ENCODE measurements at regions of chr2 and their contacts with region 1.

Region 1: GRCh38 chr2:146634256-146635097 is 1210.4 kb upstream of the ACVR2A start:
- DNase-seq: peak; percentile 45 to 51
- H3K4me3 ChIP-seq: no peak overlapping the region
- H3K27ac ChIP-seq: no peak overlapping the region
- H3K4me1 ChIP-seq: no peaks in the 10 kb centered on the region
- H3K27me3 ChIP-seq: no peaks in the 10 kb centered on the region
- CTCF ChIP-seq: no peak

Region 2: GRCh38 chr2:146506851-146507250 is 127.6 kb before region 1 on chr2:
- CTCF ChIA-PET with region 1: no interaction called
- POLR2A ChIA-PET with region 1: no interaction called
- intact Hi-C with region 1: no loop called
- DNase-seq: no peak
- H3K4me3 ChIP-seq: no peak overlapping the region
- H3K27ac ChIP-seq: no peak overlapping the region
- H3K4me1 ChIP-seq: no peaks in the 10 kb centered on the region
- H3K27me3 ChIP-seq: no peaks in the 10 kb centered on the region
- CTCF ChIP-seq: no peak

Region 3: DNA sequence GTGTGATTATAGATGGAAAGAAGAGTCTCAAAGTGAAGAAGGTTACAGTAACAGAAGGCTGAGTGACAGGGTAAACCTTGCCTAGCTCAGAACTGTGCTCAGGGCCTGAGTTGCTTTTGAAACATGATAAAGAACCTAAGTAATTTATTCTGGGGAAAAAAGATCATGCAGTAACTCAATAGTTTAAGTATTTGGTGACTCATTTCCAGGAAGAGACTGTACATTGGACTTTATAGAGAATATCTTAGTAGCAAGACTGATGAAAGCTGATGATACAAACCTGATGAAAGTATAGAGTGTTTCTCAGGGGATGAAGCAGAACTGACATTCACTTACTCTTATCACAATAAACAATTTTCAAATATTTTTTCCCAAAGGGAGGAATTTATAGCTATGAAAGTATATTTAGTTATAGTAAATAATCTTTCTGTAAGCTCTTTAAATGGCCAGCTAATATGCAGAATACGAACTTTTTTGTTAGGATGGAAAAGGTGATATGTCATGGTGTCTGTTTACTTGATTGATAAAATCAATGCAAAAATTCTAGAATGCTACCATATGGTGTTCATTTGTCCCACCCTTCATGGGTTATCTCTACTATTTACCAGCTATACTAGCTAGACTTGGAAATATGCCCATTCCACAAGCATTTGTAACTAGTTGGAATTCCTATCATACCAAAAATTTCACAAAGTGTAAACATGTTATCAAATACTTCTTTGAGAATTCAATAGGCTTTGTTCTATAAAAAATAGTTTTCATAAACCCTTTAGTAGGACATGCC is 55.1 kb before region 1 on chr2:
- CTCF ChIA-PET with region 1: interaction called, 3 read pairs
- POLR2A ChIA-PET with region 1: no interaction called
- intact Hi-C with region 1: loop called (anchors 1 kb)
- DNase-seq: peak; percentile 6 to 47
- H3K4me3 ChIP-seq: no peak overlapping the region
- H3K27ac ChIP-seq: peak overlapping the region; percentile 23; the same call in 1 of the 2 replicates
- H3K4me1 ChIP-seq: peaks cover 4% of the 10 kb centered on the region; the same call in 1 of the 2 replicates
- H3K27me3 ChIP-seq: no peaks in the 10 kb centered on the region
- CTCF ChIP-seq: no peak

Region 4: GRCh38 chr2:146602383-146602782 is 32.1 kb before region 1 on chr2:
- CTCF ChIA-PET with region 1: no interaction called
- POLR2A ChIA-PET with region 1: interaction called, 5 read pairs
- intact Hi-C with region 1: loop called (anchors 1 kb)
- DNase-seq: peak in 1 of 2 experiments; percentile 9
- H3K4me3 ChIP-seq: no peak overlapping the region
- H3K27ac ChIP-seq: no peak overlapping the region
- H3K4me1 ChIP-seq: no peaks in the 10 kb centered on the region
- H3K27me3 ChIP-seq: no peaks in the 10 kb centered on the region
- CTCF ChIP-seq: no peak

Region 5: DNA sequence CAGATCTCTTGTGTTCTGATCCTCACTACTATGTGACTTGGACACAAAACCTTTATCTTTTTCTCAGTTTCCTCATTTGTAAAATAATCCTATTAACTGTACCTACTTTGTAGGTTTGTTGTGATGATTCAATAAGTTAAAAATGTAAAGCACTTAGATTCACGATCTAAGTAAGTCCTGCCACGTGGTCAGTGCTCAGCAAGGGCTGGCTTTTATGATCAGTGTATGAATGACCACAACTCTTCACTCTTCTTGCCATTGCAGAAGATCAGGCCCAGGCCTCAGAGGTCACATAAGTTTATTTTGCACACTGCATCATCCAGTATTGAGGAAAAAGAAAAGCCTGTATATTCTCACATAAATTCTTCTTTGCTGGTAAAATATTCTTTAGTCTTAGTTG is 17.8 kb after region 1 on chr2:
- CTCF ChIA-PET with region 1: no interaction called
- POLR2A ChIA-PET with region 1: no interaction called
- intact Hi-C with region 1: no loop called
- DNase-seq: no peak
- H3K4me3 ChIP-seq: no peak overlapping the region
- H3K27ac ChIP-seq: no peak overlapping the region
- H3K4me1 ChIP-seq: no peaks in the 10 kb centered on the region
- H3K27me3 ChIP-seq: no peaks in the 10 kb centered on the region
- CTCF ChIP-seq: no peak

Region 6: DNA sequence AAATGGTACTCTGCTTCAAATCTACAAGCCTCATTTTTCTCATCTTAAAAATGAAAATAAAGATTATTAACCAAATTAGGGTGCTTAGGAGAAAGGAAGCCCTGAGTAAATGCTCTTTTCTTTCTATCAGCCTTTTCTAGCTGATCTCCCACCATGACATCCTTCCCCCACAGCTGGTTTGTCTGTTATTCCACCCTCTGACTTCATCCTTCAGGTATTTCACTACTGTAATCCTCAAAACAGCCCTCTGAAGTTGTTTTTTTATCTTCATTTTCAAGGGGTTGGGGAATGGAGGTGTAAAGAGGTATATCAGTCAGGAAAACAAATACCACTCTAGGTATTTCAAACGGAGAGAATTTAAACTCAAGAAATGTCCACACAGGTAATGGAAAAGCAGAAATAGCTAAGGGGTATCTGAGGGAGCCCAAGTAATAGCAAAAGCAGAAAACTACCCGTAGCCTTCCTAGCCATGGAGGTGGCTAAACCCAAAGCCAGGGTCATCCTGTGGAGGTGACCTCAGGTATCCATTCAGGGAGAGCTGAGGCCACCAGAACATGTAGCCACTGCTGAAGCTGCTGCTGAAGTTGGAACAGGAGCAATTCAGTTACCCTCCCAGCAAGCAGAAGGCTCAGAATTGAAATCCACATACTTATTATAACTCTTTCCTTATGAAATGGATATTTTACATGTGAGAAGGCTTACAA is 219.4 kb after region 1 on chr2:
- CTCF ChIA-PET with region 1: no interaction called
- POLR2A ChIA-PET with region 1: no interaction called
- intact Hi-C with region 1: no loop called
- DNase-seq: no peak
- H3K4me3 ChIP-seq: no peak overlapping the region
- H3K27ac ChIP-seq: no peak overlapping the region
- H3K4me1 ChIP-seq: no peaks in the 10 kb centered on the region
- H3K27me3 ChIP-seq: no peaks in the 10 kb centered on the region
- CTCF ChIP-seq: no peak

Region 7: GRCh38 chr2:148218326-148219075 is 1584.0 kb after region 1 on chr2:
- CTCF ChIA-PET with region 1: no interaction called
- POLR2A ChIA-PET with region 1: no interaction called
- intact Hi-C with region 1: no loop called
- DNase-seq: no peak
- H3K4me3 ChIP-seq: no peak overlapping the region
- H3K27ac ChIP-seq: no peak overlapping the region
- H3K4me1 ChIP-seq: no peaks in the 10 kb centered on the region
- H3K27me3 ChIP-seq: no peaks in the 10 kb centered on the region
- CTCF ChIP-seq: no peak